ENCODE measurements at regions of chr4 and their contacts with region 1.

Region 1: DNA sequence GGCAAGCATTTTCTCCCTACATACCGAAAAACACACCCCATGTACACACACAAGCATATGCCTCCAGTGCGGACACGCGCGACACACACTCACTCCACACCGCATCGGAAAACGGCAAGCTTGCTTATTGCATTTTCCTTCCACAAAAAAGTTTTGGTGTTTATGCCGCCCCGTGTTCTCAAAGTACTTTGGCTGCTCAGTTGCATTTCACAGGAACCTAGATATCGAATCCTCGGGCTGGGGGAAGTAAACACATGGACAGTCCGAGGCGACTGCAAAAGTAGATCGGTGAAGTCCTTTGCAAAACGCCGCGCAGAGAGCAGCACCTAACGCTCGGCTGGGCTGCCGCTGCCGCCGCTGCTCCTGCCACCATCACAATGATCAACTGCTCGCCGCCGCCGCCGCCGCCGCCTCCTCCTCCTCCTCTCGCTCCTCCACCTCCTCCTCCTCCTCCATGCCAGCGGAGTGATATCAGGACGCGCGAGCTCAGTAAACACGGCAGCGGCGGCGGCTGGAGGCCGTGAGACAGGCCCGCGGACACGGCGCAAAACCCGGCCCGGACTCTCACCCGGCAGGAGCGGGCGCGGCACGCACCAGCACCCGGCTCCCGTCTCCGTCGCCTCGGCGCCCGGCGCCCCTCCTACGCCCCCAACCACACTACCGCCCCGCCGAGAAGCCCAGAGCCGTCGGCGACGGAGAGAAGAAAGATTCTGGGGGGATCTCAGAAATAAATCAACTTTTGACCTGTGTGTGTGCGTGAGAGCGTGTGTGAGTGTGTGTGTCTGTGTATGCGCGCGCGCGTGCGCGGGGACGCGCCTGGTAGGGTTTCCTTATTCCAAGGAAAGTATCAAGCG is at the start of gene MAML3:
- DNase-seq: peak; percentile 94
- H3K4me3 Mint-ChIP-seq: peak within 1 kb of the TSS; percentile 95
- H3K27ac Mint-ChIP-seq: peak within 1 kb of the TSS; percentile 86
- H3K4me1 Mint-ChIP-seq: no peaks in the 10 kb centered on the region
- H3K27me3 Mint-ChIP-seq: no peaks in the 10 kb centered on the region
- CTCF ChIP-seq: no peak
- total RNA-seq, gene MAML3: 0.89 and 1.7 TPM in 2 replicates

Region 2: DNA sequence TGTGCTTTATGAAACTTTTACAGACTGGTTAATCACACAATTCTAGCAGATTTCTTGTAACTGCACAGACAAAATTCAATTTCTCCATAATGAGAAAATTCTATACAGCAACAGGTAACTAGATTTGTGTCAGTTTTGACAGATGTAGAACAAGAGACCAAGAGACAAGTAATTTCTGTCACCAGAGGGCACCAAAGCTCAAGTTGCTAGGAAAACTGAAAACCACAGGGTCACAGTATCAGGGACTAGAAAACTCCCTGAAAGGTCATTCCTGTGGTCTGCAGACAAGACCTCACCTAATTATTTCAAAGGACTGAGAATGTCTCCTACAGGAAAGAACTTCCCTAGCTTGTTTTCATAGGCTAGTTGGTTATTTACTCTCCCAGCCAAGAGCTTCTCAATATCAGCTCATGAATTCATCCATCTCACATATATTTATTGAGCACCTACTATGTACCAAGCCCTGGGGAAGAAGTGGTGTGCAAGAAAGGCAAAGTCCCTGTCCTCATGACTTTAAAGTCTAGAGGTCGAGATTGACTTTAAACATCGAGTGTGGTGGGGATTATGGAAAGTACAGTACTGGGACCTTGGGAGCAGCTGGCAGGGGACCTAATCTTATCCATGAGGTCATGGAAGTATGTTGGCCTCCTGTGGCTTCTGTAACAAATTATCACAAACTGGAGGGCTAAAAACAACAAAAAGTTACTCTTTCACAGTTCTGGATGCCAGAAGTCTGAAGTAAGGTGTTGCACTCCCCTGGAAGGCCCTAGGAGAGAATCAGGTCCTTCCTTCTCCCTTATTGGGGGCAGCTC is 550.2 kb before region 1 on chr4:
- CTCF ChIA-PET with region 1: no interaction called
- POLR2A ChIA-PET with region 1: no interaction called
- intact Hi-C with region 1: loop called (anchors 5 kb)
- DNase-seq: peak; percentile 80
- H3K4me3 Mint-ChIP-seq: no peak overlapping the region
- H3K27ac Mint-ChIP-seq: no peak overlapping the region
- H3K4me1 Mint-ChIP-seq: peaks cover 41% of the 10 kb centered on the region
- H3K27me3 Mint-ChIP-seq: no peaks in the 10 kb centered on the region
- CTCF ChIP-seq: peak; percentile 49

Region 3: DNA sequence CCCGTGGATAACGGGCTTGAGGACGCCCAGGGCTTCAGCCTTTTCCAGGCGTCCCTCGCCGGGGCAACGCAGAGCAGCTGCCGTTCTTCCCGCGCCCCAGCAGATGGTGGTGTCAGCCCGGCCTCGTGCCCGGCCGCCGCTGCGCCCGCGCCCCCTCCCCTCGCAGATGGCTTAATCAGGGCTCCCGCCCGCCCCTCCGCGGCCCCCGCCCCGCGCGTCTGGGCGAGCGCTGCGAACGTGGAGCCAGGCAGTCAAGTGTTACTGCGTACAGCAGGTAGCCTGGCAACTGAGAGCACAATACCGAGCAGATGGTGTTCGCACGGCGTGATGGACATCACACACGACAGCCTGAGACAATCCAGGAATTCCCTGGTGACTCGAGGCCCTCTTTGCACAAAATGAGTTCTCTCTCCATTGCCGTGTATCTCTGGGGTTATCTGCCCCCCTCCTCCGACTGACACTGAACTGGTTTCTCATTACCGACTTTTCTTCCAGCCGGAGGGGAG is 419.0 kb before region 1 on chr4:
- CTCF ChIA-PET with region 1: no interaction called
- POLR2A ChIA-PET with region 1: interaction called, 13 read pairs
- intact Hi-C with region 1: loop called (anchors 5 kb)
- DNase-seq: peak; percentile 35
- H3K4me3 Mint-ChIP-seq: peak overlapping the region; percentile 28
- H3K27ac Mint-ChIP-seq: no peak overlapping the region
- H3K4me1 Mint-ChIP-seq: peaks cover 6% of the 10 kb centered on the region
- H3K27me3 Mint-ChIP-seq: no peaks in the 10 kb centered on the region
- CTCF ChIP-seq: peak; percentile 52

Region 4: GRCh38 chr4:140012688-140013486 is 141.1 kb before region 1 on chr4:
- CTCF ChIA-PET with region 1: no interaction called
- POLR2A ChIA-PET with region 1: interaction called, 5 read pairs
- intact Hi-C with region 1: loop called (anchors 1 kb)
- DNase-seq: peak; percentile 86
- H3K4me3 Mint-ChIP-seq: no peak overlapping the region
- H3K27ac Mint-ChIP-seq: peak overlapping the region; percentile 0
- H3K4me1 Mint-ChIP-seq: peaks cover 7% of the 10 kb centered on the region
- H3K27me3 Mint-ChIP-seq: no peaks in the 10 kb centered on the region
- CTCF ChIP-seq: peak; percentile 47

Region 5: DNA sequence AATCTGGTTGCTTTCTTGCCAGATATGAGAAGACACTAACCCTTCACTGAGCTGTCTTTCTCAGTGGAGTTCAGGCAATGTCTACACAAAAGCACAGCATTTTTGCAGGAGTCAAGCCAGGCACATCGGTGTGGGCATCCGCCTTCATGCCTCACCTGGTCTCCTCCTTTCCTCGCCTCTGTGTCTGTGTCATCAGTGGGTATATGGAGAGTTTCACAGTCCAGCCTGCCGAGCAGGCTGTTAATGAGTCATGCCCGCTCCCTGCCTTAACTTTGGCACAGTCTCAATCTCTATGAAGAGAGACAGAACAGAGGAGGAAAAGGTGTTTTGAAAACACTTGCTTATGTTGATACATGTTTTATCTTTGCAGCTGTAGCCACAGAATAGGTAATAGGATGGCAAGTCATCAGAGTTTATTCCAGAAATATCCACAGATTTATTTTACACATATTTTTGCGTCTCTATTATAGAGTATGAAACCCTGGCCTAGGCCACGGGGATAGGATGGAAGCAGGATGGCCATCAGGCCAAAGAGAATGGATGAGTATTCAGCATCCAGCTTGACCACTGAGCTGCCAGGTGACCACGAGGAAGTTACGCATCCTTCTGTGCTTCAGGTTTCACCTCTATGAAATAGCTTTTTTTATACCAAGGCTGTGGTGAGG is 32.8 kb after region 1 on chr4:
- CTCF ChIA-PET with region 1: no interaction called
- POLR2A ChIA-PET with region 1: interaction called, 25 read pairs
- intact Hi-C with region 1: loop called (anchors 1 kb)
- DNase-seq: peak; percentile 89
- H3K4me3 Mint-ChIP-seq: no peak overlapping the region
- H3K27ac Mint-ChIP-seq: peak overlapping the region; percentile 87
- H3K4me1 Mint-ChIP-seq: peaks cover 17% of the 10 kb centered on the region
- H3K27me3 Mint-ChIP-seq: no peaks in the 10 kb centered on the region
- CTCF ChIP-seq: no peak

Region 6: GRCh38 chr4:140308366-140309123 is 154.6 kb after region 1 on chr4:
- CTCF ChIA-PET with region 1: no interaction called
- POLR2A ChIA-PET with region 1: interaction called, 13 read pairs
- intact Hi-C with region 1: no loop called
- DNase-seq: peak; percentile 91
- H3K4me3 Mint-ChIP-seq: peak overlapping the region; percentile 59
- H3K27ac Mint-ChIP-seq: peak overlapping the region; percentile 54
- H3K4me1 Mint-ChIP-seq: peaks cover 49% of the 10 kb centered on the region
- H3K27me3 Mint-ChIP-seq: no peaks in the 10 kb centered on the region
- CTCF ChIP-seq: no peak

Region 7: GRCh38 chr4:141074098-141074878 is 920.3 kb after region 1 on chr4:
- CTCF ChIA-PET with region 1: no interaction called
- POLR2A ChIA-PET with region 1: no interaction called
- intact Hi-C with region 1: no loop called
- DNase-seq: peak; percentile 11
- H3K4me3 Mint-ChIP-seq: no peak overlapping the region
- H3K27ac Mint-ChIP-seq: no peak overlapping the region
- H3K4me1 Mint-ChIP-seq: no peaks in the 10 kb centered on the region
- H3K27me3 Mint-ChIP-seq: no peaks in the 10 kb centered on the region
- CTCF ChIP-seq: no peak